ENCODE measurements at regions of chr12 and their contacts with region 1.

Region 1: DNA sequence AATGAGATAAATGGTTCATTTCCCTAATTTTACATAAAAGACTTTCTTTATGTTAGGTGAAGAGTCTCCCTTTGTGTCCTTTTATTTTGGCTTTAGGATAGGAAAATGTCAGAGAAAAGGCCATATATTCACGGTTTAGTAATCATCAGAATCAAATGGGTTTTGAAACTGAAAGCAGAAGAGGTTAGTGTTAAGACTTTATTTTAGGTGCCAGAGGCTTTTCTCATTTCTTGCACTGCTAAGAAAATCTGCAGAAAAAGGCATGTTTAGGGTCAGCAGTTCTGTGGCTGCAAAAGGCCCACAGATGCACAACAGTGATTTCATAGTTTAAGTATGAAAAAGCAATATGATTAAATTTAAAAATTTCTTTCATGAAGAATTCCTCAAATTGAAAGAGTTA is 80.4 kb upstream of the SINHCAF start:
- DNase-seq: peak; percentile 88
- H3K4me3 ChIP-seq: peak overlapping the region; percentile 33
- H3K27ac ChIP-seq: peak overlapping the region; percentile 99
- H3K4me1 ChIP-seq: peaks cover 71% of the 10 kb centered on the region
- CTCF ChIP-seq: no peak

Region 2: GRCh38 chr12:31491819-31492598 is 85.7 kb after region 1 on chr12:
- CTCF ChIA-PET with region 1: no interaction called
- POLR2A ChIA-PET with region 1: no interaction called
- intact Hi-C with region 1: no loop called
- DNase-seq: no peak
- H3K4me3 ChIP-seq: no peak overlapping the region
- H3K27ac ChIP-seq: no peak overlapping the region
- H3K4me1 ChIP-seq: no peaks in the 10 kb centered on the region
- CTCF ChIP-seq: no peak

Region 3: GRCh38 chr12:31518680-31519227 is 112.4 kb after region 1 on chr12:
- CTCF ChIA-PET with region 1: no interaction called
- POLR2A ChIA-PET with region 1: interaction called, 7 read pairs
- intact Hi-C with region 1: loop called (anchors 2 kb)
- DNase-seq: peak; percentile 33
- H3K4me3 ChIP-seq: no peak overlapping the region
- H3K27ac ChIP-seq: peak overlapping the region; percentile 15
- H3K4me1 ChIP-seq: peaks cover 32% of the 10 kb centered on the region
- CTCF ChIP-seq: no peak

Region 4: DNA sequence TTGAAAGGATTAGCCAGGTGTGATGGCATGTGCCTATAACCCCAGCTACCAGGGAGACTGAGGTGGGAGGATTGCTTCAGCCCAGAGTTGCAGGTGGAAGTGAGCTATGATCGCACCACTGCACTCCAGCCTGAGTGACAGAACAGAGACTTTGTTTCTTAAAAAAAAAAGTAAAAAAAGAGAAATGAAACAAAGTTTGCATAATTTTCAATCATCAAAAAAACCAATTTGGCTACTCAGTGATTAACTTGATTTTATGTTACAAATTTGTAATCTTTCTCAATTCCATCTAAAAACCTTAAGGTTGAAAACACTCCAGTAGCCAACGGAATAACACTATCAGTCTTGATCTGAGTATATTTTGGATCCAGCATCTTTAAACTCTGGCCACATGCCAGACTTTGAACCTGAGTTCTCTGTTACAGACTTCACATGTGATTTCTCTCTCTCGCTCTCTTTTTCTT is 197.2 kb after region 1 on chr12:
- CTCF ChIA-PET with region 1: no interaction called
- POLR2A ChIA-PET with region 1: interaction called, 21 read pairs
- intact Hi-C with region 1: loop called (anchors 1 kb)
- DNase-seq: peak; percentile 92
- H3K4me3 ChIP-seq: peak overlapping the region; percentile 42
- H3K27ac ChIP-seq: peak overlapping the region; percentile 96
- H3K4me1 ChIP-seq: peaks cover 69% of the 10 kb centered on the region
- CTCF ChIP-seq: no peak

Region 5: DNA sequence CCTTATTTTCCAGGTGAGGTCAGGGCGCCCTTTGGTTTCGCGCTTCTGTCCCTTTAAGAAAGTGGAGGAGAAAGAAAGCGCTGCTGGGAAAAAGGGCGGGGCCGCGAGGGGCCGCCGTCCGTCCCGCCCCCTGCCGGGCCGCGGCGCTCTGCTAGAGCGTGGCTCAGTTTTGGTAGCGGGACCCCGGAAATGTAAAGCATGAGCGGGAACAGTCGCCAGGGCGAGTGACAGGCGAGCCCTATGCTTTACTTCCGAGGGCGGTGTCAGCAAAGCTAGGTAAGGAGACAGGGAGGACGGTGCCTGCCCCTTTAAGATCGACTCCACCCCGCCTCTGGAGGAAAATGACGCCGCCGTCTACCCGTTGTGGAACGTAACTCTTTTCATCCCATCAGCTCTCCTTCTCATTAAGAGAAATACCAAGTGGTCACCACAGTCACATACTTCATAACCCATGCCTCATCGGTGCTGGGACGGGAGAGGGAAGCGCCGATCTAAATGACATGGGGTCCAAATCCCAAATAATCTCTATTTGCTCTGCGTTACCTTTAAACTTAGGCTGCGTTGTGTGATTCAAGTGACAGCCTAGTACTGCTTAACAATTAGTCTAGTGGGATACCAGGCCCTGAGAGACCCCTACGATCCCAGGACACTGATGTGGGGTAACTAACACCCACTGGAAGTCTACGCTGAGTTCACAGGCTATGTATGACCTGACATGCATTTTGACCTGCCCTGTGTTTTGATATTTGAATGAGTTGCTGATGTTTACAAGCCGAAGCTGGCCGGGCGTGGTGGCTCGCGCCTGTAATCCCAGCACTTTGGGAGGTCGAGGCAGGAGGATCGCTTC is 253.0 kb after region 1 on chr12 and contains the start of gene ETFBKMT:
- CTCF ChIA-PET with region 1: no interaction called
- POLR2A ChIA-PET with region 1: interaction called, 3 read pairs
- intact Hi-C with region 1: loop called (anchors 5 kb)
- DNase-seq: peak; percentile 99
- H3K4me3 ChIP-seq: peak within 1 kb of the TSS; percentile 86
- H3K27ac ChIP-seq: peak within 1 kb of the TSS; percentile 86
- H3K4me1 ChIP-seq: peaks cover 20% of the 10 kb centered on the region
- CTCF ChIP-seq: peak; percentile 65
- total RNA-seq, gene ETFBKMT: 0.54 and 0.92 TPM in 2 replicates

Region 6: GRCh38 chr12:32312049-32312670 is 905.8 kb after region 1 on chr12:
- CTCF ChIA-PET with region 1: no interaction called
- POLR2A ChIA-PET with region 1: no interaction called
- intact Hi-C with region 1: loop called (anchors 5 kb)
- DNase-seq: peak; percentile 82
- H3K4me3 ChIP-seq: no peak overlapping the region
- H3K27ac ChIP-seq: no peak overlapping the region
- H3K4me1 ChIP-seq: peaks cover 12% of the 10 kb centered on the region
- CTCF ChIP-seq: peak; percentile 90

Measured in OCI-LY7 (cell line).